Caki2 (cell line): ENCODE measurements at regions of chr4 and their contacts with region 1.

Region 1: DNA sequence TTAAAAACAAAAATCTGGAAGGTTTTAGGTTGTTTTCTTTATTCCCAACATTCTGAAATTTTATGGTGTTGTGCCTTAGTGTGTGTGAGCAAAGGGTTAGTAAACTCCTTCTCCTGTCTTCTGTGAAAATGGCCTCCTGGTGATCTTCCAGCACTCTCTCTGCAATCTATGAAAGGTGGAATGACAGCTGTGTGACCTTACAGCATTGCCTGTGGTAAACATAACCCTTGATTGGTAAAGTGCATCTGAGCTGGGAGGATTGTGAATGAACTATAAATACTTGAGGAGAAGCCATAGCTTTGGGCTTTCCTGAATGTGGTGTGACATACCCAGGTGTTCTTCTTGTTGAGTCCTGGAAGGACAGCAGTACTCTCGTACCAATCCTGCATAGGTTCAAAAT is 10.0 kb downstream of the ART3 start:
- DNase-seq: no peak

Region 2: DNA sequence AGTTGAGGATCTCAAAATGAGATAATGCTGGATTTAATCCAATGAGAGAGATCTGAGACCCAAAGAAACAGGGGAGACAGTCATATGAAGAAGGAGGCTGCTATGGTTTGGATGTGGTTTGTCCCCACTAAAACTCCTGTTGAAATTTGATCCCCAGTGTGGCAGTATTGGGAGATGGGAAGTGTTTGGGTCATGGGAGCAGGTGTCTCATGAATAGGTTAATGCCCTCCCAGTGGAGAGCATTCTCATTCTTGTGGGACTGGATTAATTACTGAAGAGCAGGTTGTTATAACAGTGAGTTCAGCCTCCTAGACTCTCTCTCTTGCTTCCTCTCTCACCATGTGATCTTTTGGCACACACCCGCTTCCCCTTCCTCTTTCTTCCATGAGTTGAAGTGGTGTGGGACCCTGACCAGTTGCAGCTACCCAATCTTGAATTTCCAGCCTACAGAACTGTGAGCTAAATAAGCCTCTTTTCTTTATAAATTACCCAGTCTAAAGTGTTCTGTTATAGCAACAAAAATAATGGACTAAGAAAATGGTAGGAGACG is 252.6 kb before region 1 on chr4:
- in situ Hi-C with region 1: no loop called
- DNase-seq: no peak

Region 3: DNA sequence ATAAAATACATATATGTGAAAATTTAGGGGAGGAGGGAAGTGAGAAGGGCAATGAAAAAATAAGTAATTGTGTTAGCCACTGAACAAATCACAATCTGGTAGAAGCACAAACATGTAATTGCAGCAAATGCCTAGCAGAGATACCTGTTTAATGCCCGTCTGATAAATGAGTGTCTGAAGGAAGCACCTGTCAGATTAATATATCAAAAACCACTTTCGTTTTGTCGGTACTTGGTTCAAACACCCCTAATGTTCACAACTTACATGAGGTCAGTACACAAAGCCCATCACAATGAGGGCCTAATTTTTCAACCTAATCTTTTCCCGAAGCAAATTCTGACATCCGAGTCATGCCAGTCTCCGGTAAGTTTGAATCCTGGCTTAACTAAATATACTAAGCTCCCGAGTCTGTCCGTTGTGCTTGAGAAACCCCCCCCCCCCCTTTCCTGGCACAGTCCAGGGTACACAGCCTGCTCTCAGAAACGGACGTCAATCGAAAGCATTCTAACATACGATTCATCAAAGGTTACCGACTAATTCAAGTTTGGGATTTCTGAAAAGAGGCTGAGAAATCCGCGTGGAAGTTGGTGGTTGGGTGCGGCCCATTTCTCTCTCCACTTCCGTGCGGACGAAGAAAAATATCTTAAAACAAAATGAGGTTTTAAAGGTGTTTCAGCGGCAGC is 94.6 kb before region 1 on chr4:
- in situ Hi-C with region 1: loop called (anchors 5 kb)
- DNase-seq: no peak